ENCODE measurements at regions of chr1 and their contacts with region 1.

Region 1: DNA sequence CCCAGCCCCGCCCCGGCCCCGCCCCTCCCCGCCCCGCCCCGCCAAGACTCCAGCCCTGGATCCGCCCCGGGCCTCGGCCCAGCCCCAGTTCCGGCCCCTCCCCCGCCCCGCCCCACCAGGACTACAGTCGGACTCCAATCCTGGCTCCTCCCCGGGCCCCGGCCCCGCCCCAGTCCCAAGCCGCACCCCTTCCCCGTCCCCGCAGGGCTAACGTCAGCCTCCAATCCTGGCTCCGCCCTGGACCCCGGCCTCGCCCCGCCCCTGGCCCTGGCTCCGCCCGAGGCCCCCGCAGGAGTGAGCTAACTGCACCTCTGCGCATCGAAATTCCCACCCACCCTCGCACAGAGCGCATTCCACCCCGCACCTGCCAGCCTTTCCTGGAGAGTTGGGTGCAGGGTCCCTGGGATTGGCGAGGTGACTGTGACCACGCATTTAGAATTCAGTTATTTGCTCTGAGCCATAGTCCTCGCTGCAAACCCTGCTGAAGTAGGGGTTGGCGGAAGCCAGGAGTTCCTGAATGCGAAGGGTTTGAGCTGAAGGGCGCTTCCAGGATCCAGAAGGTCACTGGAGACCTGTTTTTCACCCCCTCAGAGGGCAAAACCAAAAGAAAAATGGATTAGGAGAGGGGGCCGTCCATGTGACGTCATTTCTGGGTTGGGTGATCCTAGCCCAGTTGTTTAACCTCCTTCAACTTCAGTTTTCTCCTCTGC is 588 bp upstream of the IGSF8 start:
- DNase-seq: peak; percentile 83
- ATAC-seq: peak; percentile 90
- H3K4me3 ChIP-seq: peak overlapping the region; percentile 19 to 39
- H3K27ac ChIP-seq: peak overlapping the region; percentile 55
- H3K4me1 ChIP-seq: peaks cover 11 to 36% of the 10 kb centered on the region in 2 experiments
- H3K27me3 ChIP-seq: no peaks in the 10 kb centered on the region
- CTCF ChIP-seq: no peak
- POLR2A ChIP-seq: no peak
- RAD21 ChIP-seq: no peak

Region 2: DNA sequence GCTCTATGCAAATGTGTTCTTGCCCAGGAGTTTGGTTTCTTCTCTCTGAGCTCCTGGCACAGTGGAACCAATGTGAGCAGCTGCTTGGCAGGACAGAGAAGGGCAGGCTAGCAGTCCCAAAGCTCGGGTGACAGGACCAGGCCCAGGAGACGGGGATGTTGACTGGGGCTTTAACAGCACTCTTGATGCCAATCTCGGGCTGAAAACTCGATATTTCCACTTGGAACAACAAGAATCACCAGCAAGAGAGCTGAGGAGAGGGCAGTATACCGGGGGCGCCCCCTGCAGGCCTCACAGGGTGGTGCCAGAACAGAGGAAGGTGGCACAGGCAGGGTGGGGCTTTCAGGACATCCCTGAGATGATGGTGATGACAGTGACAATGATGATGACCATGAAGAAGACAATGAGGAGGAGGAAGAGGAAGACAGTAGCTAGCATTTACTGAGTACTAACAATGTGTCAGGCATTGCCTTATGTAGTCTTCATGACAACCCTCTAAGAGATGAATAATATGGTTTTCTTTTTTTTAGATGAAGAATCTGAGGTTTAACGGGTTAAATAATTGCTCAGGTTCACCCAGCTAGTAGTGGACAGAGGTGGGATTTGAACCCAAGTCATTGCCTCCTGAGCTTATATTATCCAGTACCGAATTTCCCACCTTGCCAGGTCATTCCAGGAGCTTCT is 20.4 kb before region 1 on chr1:
- CTCF ChIA-PET with region 1: interaction called, 10 read pairs
- POLR2A ChIA-PET with region 1: no interaction called
- RAD21 ChIA-PET with region 1: no interaction called
- intact Hi-C with region 1: no loop called
- DNase-seq: peak; percentile 23
- ATAC-seq: peak; percentile 95
- H3K4me3 ChIP-seq: no peak overlapping the region
- H3K27ac ChIP-seq: no peak overlapping the region
- H3K4me1 ChIP-seq: no peaks in the 10 kb centered on the region; a peak in 1 of 4 replicates
- H3K27me3 ChIP-seq: peaks cover 26% of the 10 kb centered on the region
- CTCF ChIP-seq: peak; percentile 82 to 98 (median 97)
- POLR2A ChIP-seq: no peak
- RAD21 ChIP-seq: peak; percentile 74

Region 3: GRCh38 chr1:160161965-160162705 is 63.1 kb after region 1 on chr1:
- CTCF ChIA-PET with region 1: no interaction called
- POLR2A ChIA-PET with region 1: no interaction called
- RAD21 ChIA-PET with region 1: no interaction called
- intact Hi-C with region 1: loop called (anchors 2 kb)
- DNase-seq: no peak
- ATAC-seq: peak; percentile 93
- H3K4me3 ChIP-seq: no peak overlapping the region
- H3K27ac ChIP-seq: no peak overlapping the region
- H3K4me1 ChIP-seq: no peaks in the 10 kb centered on the region
- H3K27me3 ChIP-seq: no peaks in the 10 kb centered on the region
- CTCF ChIP-seq: peak; percentile 43 to 61 (median 55); a peak in 5 of 6 replicates
- POLR2A ChIP-seq: no peak
- RAD21 ChIP-seq: peak; percentile 59

Region 4: DNA sequence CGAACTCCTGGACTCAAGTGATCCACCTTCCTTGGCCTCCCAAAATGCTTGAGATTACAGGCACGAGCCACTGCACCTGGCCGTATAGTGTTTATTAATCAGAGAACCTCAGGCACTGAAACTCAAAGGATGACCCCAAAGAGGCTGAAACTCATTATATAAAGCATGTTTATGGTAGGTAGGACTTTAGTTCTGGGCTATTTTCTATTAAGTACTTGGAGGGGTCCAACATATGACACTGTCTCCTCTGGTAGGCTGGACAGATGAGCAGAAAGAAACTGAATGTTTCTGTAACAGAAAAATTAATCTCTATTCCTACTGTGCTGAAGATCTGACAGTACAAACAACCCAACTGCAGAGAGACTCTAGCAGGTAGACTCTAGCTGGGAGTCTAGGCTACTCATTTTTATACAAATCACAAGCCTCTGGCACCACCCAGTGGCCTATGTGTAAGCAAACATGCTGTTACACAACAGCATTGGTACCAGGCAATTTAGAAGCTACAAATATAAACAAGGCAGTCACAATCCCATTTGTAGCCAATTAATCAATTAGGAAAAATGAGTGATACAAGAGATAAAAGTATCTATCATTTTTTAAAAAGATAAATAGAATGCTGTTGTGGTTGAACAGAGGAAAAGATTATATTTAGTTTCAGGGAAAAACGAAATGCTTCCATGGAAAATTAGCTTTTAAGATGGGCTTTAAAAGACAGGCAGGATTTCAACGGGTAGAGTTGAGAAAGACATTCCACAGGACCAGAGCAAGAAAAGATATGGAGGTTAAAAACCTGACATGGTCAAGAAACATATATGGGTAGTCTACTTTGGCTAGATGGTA is 152.9 kb after region 1 on chr1:
- CTCF ChIA-PET with region 1: interaction called, 59 read pairs
- POLR2A ChIA-PET with region 1: interaction called, 5 read pairs
- RAD21 ChIA-PET with region 1: interaction called, 5 to 10 read pairs
- intact Hi-C with region 1: loop called (anchors 1 kb)
- DNase-seq: peak; percentile 38
- ATAC-seq: peak; percentile 96
- H3K4me3 ChIP-seq: no peak overlapping the region
- H3K27ac ChIP-seq: no peak overlapping the region
- H3K4me1 ChIP-seq: peaks cover 5 to 11% of the 10 kb centered on the region in 2 experiments; a peak in 3 of 4 replicates
- H3K27me3 ChIP-seq: no peaks in the 10 kb centered on the region
- CTCF ChIP-seq: peak; percentile 69 to 83 (median 71); a peak in 5 of 6 replicates
- POLR2A ChIP-seq: no peak
- RAD21 ChIP-seq: peak; percentile 81

Region 5: DNA sequence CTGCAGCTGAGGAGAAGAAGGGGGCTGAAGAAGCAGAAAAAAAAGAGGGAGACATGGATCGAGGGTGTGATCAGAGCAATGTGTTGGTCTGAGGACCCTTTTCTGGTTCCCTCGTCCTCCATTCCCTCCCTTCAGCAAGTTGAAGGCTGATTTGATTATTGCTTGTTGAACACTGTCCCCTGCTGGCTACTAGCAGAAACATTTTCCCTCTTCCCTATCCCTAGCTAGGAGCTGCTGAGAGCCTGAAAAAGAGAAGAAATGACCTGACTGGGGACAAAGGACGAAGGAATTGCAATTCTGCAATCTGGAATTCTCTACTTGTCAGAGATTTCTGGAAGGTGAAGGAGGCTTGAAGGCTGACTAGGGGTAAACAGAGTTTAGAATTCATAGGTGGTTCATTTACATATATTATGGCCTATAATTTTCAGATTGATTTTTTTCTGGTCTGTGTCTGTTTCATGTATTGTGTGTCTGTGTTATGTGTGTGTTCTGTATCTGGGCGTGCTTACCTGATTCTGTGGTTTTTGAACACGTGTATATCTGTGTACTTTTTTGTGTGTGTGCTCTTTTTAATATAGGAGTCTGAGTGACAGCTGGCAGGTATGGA is 277.6 kb after region 1 on chr1:
- CTCF ChIA-PET with region 1: interaction called, 51 read pairs
- POLR2A ChIA-PET with region 1: no interaction called
- RAD21 ChIA-PET with region 1: interaction called, 5 read pairs
- intact Hi-C with region 1: loop called (anchors 1 kb)
- DNase-seq: peak; percentile 61
- ATAC-seq: peak; percentile 92
- H3K4me3 ChIP-seq: no peak overlapping the region
- H3K27ac ChIP-seq: no peak overlapping the region
- H3K4me1 ChIP-seq: peaks cover 0 to 8% of the 10 kb centered on the region in 2 experiments; a peak in 1 of 4 replicates
- H3K27me3 ChIP-seq: no peaks in the 10 kb centered on the region
- CTCF ChIP-seq: peak; percentile 89 to 96 (median 92)
- POLR2A ChIP-seq: no peak
- RAD21 ChIP-seq: peak; percentile 96

Region 6: DNA sequence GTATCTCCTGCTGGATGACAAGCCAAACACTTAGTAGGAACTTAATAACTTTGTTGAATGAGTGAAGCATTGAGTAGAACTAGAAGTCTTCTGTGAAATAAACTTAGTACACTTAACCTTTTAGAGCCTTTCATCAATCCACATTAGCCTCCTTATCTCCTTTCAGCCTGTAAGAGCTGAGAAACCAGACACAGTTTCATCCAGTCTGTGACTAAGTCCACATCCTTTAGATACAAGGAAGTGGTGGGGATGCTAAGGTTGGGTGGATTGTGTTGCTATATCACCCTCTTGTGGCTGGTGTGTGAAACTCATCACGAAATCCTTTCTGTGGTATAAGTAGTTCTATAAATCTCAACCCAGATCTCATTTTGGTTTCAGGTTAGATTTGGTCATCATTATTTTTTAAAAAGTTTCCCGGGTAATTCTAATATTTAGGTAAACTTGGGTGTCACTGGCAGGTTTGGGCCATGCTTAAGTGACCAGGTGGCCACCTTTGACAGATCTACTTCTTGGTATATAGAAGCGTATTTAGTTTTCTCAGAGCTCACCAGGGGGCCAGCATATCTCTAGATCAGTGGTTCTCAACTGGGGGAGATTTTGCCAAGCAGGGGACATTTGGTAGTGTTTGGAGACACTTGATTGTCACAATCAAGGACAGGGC is 508.1 kb after region 1 on chr1:
- CTCF ChIA-PET with region 1: no interaction called
- POLR2A ChIA-PET with region 1: no interaction called
- RAD21 ChIA-PET with region 1: no interaction called
- intact Hi-C with region 1: loop called (anchors 5 kb)
- DNase-seq: peak; percentile 68
- ATAC-seq: peak; percentile 92
- H3K4me3 ChIP-seq: no peak overlapping the region
- H3K27ac ChIP-seq: no peak overlapping the region
- H3K4me1 ChIP-seq: no peaks in the 10 kb centered on the region
- H3K27me3 ChIP-seq: peaks cover 34% of the 10 kb centered on the region; the same call in 1 of the 2 replicates
- CTCF ChIP-seq: peak; percentile 65 to 90 (median 87)
- POLR2A ChIP-seq: no peak
- RAD21 ChIP-seq: peak; percentile 91

Measured in HCT116 (cell line).